ENCODE measurements at regions of chr2 and their contacts with region 1.

Region 1: DNA sequence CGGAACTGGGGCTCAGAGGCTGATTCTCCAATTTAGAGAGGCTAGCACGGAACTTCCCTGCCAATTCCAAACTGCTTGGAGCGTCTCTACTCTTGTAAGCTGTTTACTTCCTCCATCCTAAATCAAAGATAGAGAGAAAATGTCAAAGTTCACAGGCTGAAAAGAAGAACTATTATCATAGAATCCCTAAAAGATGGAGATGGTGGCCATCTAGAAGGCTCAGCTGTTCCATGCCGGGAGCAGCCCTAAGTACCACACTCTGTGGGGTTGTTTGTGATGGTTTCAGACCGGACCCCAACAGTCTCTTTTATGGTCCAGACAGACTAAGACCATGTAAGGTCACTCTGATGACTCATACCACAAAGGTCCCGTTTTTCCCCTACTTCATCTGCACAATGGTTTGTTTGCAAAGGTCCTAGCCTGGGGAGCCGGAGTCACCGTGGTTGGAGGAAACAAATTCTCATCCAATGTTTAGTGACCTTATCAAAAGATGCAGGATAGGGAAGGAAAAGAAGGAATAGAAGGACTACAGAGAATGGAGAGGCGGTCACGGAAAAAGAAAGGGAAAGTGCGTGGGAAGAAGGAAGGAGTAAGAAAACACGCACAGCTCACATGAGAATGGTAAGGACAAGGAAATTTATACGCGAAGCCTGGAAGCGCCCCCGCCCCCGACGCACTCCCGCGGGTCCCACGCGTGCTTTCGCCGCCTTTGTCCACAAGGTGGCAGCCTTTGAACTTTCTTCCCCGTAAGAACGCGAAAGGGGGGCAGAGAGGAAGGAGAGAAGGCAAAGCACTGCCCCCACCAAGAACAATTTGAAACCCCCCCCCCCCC is 453 bp upstream of the ANTXR1 start:
- DNase-seq: peak; percentile 19
- H3K4me3 ChIP-seq: peak overlapping the region; percentile 85 to 98
- H3K27ac ChIP-seq: peak overlapping the region; percentile 89 to 92
- H3K4me1 ChIP-seq: peaks cover 13 to 27% of the 10 kb centered on the region in 2 experiments
- H3K27me3 ChIP-seq: no peaks in the 10 kb centered on the region
- CTCF ChIP-seq: peak; percentile 80
- EP300 ChIP-seq: no peak
- RAD21 ChIP-seq: peak; percentile 79

Region 2: DNA sequence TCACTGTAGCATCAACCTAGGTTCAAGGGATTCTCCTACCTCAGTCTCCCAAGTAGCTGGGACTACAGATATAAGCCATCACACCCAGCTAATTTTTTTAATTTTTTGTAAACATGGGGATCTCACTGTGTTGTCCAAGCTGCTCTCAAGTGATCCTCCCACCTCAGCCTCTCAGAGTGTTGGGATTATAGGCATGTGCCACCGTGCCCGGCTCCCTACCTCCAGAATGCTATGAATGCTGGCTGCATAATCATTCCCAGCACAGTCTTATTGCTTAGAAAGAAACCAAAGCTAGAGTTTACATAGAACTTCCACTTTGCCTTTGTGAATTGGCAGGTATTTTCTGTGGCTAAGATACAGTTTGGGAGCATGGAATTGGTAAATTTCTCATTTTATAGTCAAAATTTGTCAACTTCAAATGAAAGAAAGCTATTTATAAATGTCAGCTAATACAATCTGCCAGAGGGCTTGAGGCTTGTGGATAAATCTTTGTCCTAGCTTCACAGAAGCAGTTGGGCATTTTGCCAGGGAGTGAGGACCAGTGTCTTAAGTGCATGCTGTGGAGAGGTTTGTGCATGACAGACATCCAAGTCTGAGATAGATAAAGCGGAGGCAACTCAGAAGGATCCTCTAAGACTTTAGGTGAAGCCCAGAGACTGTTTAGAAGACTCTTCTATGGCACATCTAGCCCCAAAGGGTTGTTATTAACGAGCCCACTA is 175.8 kb after region 1 on chr2:
- CTCF ChIA-PET with region 1: interaction called, 10 read pairs
- POLR2A ChIA-PET with region 1: no interaction called
- DNase-seq: no peak
- H3K4me3 ChIP-seq: no peak overlapping the region
- H3K27ac ChIP-seq: no peak overlapping the region; a peak in 1 of 4 replicates
- H3K4me1 ChIP-seq: peaks cover 8 to 41% of the 10 kb centered on the region in 2 experiments; a peak in 3 of 4 replicates
- H3K27me3 ChIP-seq: no peaks in the 10 kb centered on the region
- CTCF ChIP-seq: no peak
- EP300 ChIP-seq: no peak
- RAD21 ChIP-seq: no peak

Region 3: GRCh38 chr2:69298261-69298660 is 285.7 kb after region 1 on chr2:
- CTCF ChIA-PET with region 1: interaction called, 11 read pairs
- POLR2A ChIA-PET with region 1: no interaction called
- DNase-seq: no peak
- H3K4me3 ChIP-seq: no peak overlapping the region
- H3K27ac ChIP-seq: peak overlapping the region; percentile 9 to 85; a peak in 3 of 4 replicates
- H3K4me1 ChIP-seq: peaks cover 11 to 28% of the 10 kb centered on the region in 2 experiments; a peak in 3 of 4 replicates
- H3K27me3 ChIP-seq: no peaks in the 10 kb centered on the region
- CTCF ChIP-seq: peak; percentile 8; the same call in 1 of the 2 replicates
- EP300 ChIP-seq: peak in 1 of 2 experiments; percentile 84; a peak in 2 of 4 replicates
- RAD21 ChIP-seq: no peak

Measured in SK-N-SH (cell line).